ENCODE measurements at regions of chr1 and their contacts with region 1.

Region 1: GRCh38 chr1:12078938-12079861 is 16.1 kb downstream of the TNFRSF8 start:
- DNase-seq: peak; percentile 82
- ATAC-seq: peak; percentile 83
- H3K4me3 ChIP-seq: peak overlapping the region; percentile 52
- H3K27ac ChIP-seq: peak overlapping the region; percentile 97
- H3K4me1 ChIP-seq: peaks cover 67% of the 10 kb centered on the region
- H3K27me3 ChIP-seq: no peaks in the 10 kb centered on the region
- CTCF ChIP-seq: peak; percentile 68 to 74 (median 71)
- EP300 ChIP-seq: peak in 1 of 2 experiments; percentile 11; a peak in 3 of 4 replicates
- POLR2A ChIP-seq: peak; percentile 71
- RAD21 ChIP-seq: peak; percentile 72

Region 2: DNA sequence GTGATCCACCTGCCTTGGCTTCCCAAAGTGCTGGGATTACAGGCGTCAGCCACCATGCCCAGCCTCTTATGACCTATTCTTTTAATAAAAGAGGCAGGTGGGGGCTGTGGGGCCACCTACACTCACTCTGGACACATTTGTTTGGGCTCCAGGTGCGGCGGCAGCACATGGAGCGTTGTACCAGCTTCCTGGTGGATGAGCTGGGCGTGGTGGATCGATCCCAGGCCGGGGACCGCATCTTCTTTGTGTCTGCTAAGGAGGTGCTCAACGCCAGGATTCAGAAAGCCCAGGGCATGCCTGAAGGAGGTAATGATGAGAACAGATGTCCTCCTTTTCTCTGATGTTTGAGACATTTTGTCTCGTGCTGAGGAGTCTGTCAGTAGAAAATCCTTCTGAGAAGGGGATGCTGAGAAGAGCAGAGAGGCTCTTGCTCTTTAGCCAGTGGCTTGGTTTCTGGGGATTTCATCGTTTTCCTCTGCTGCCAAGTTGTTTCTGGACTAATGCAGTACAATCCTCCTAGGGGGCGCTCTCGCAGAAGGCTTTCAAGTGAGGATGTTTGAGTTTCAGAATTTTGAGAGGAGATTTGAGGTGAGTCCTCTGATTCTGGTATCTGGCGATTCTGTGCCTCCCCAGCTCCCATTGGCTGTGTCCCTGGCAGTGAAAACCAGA is 77.8 kb before region 1 on chr1:
- CTCF ChIA-PET with region 1: interaction called, 23 read pairs
- POLR2A ChIA-PET with region 1: interaction called, 7 read pairs
- RAD21 ChIA-PET with region 1: interaction called, 11 read pairs
- SMC1A ChIA-PET with region 1: interaction called, 14 read pairs
- in situ Hi-C with region 1: no loop called
- intact Hi-C with region 1: loop called (anchors 2 kb)
- DNase-seq: no peak
- ATAC-seq: peak; percentile 27
- H3K4me3 ChIP-seq: no peak overlapping the region
- H3K27ac ChIP-seq: no peak overlapping the region
- H3K4me1 ChIP-seq: peaks cover 22% of the 10 kb centered on the region
- H3K27me3 ChIP-seq: no peaks in the 10 kb centered on the region
- CTCF ChIP-seq: peak; percentile 64 to 73 (median 67)
- EP300 ChIP-seq: no peak
- POLR2A ChIP-seq: no peak
- RAD21 ChIP-seq: peak; percentile 70

Region 3: DNA sequence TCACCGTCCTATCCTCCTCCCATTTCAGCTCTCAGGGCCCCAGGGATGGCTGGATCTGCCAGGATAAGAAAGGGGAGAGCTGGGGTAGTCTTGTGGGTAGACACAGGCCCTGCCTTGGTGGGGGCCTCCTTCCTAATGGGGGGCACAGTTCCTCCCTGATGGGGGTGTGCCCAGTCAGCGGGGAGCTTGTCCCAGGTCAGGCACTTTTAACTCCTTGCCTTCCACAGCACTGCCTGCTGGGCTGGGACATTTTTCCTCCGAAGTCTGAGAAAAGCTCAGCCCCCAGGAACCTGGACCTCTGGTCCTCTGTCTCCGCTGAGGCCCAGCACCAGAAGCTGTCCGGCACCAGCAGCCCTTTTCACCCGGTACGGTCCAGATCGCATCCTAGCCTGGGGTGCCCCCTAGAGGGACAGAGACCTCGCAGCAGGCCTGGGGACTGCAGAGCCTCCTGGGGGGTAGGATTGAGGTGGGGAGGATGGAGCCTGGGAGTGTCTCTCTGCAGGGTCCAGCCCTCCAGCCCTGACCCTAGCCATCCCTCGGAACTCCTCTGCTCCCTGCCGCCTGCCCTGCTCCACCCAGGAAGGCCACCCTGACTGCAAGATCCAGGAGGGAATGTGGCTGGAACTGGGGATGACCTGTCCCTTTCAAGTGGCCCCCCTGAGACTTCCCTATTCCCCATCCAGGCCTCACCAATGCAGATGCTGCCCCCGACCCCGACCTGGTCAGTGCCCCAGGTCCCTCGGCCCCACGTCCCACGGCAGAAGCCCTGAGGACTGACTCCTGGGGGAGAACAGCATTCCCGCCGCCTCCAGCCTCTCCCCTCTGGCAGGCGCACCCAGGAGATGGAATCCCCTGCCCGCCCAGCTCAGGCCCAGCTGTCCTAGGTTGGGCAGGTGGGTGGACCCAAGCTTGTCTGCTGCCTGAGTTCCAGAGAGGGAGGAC is 47.9 kb before region 1 on chr1:
- CTCF ChIA-PET with region 1: interaction called, 10 read pairs
- POLR2A ChIA-PET with region 1: no interaction called
- RAD21 ChIA-PET with region 1: interaction called, 70 read pairs
- SMC1A ChIA-PET with region 1: interaction called, 50 read pairs
- in situ Hi-C with region 1: no loop called
- intact Hi-C with region 1: no loop called
- DNase-seq: no peak
- ATAC-seq: peak; percentile 95
- H3K4me3 ChIP-seq: no peak overlapping the region
- H3K27ac ChIP-seq: no peak overlapping the region
- H3K4me1 ChIP-seq: no peaks in the 10 kb centered on the region
- H3K27me3 ChIP-seq: no peaks in the 10 kb centered on the region
- CTCF ChIP-seq: peak; percentile 68 to 80 (median 70)
- EP300 ChIP-seq: no peak
- POLR2A ChIP-seq: no peak
- RAD21 ChIP-seq: peak; percentile 82

Region 4: GRCh38 chr1:12046749-12047119 is 32.5 kb before region 1 on chr1:
- CTCF ChIA-PET with region 1: interaction called, 53 read pairs
- POLR2A ChIA-PET with region 1: interaction called, 134 read pairs
- RAD21 ChIA-PET with region 1: interaction called, 53 read pairs
- SMC1A ChIA-PET with region 1: interaction called, 38 read pairs
- in situ Hi-C with region 1: no loop called
- intact Hi-C with region 1: loop called (anchors 2 kb)
- DNase-seq: no peak
- ATAC-seq: no peak; the same call in 1 of the 3 replicates
- H3K4me3 ChIP-seq: no peak overlapping the region
- H3K27ac ChIP-seq: peak overlapping the region; percentile 94
- H3K4me1 ChIP-seq: peaks cover 75% of the 10 kb centered on the region
- H3K27me3 ChIP-seq: no peaks in the 10 kb centered on the region
- CTCF ChIP-seq: no peak
- EP300 ChIP-seq: no peak
- POLR2A ChIP-seq: no peak
- RAD21 ChIP-seq: no peak

Region 5: GRCh38 chr1:12059722-12060464 is 19.3 kb before region 1 on chr1:
- CTCF ChIA-PET with region 1: interaction called, 80 read pairs
- POLR2A ChIA-PET with region 1: interaction called, 134 read pairs
- RAD21 ChIA-PET with region 1: interaction called, 120 read pairs
- SMC1A ChIA-PET with region 1: interaction called, 106 read pairs
- in situ Hi-C with region 1: no loop called
- intact Hi-C with region 1: no loop called
- DNase-seq: no peak
- ATAC-seq: peak; percentile 64
- H3K4me3 ChIP-seq: peak overlapping the region; percentile 36; the same call in 1 of the 2 replicates
- H3K27ac ChIP-seq: peak overlapping the region; percentile 62
- H3K4me1 ChIP-seq: peaks cover 56% of the 10 kb centered on the region
- H3K27me3 ChIP-seq: no peaks in the 10 kb centered on the region
- CTCF ChIP-seq: 0 out of 6 replicates have a peak, but pooled peaks of 1 of the 3 experiments have one; percentile 0
- EP300 ChIP-seq: no peak
- POLR2A ChIP-seq: no peak
- RAD21 ChIP-seq: no peak

Region 6: DNA sequence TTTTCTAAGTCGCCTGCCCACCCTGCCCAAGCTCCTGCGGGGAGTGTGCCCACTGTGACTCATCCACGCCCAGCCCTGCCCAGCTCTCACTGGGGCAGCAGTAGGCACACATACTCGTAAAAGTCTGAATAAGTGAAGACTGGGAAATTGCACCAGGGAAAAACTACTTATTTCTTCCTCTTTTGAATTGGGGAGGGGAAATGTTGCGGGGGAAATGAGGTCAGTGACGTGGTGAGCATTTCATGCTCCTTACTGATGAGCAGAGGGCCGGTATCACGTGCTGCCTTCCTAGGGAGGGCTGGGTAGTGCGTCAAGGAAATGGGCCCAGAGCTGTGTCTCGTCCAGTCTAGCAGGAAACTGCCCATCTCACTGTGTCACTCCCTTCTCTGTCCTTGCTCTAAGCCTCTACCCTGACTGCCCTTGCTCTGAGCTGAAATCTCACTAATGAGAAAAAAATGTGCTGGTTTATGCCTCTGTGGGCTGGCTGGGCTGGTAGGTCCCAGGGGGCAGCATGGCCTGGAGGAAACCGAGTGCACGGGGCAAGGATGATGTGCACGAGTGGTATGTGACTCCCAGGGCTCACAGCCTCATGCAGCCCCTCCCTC is 74.1 kb after region 1 on chr1:
- CTCF ChIA-PET with region 1: interaction called, 6 read pairs
- POLR2A ChIA-PET with region 1: interaction called, 4 read pairs
- RAD21 ChIA-PET with region 1: no interaction called
- SMC1A ChIA-PET with region 1: interaction called, 10 read pairs
- in situ Hi-C with region 1: no loop called
- intact Hi-C with region 1: no loop called
- DNase-seq: peak; percentile 78
- ATAC-seq: peak; percentile 68
- H3K4me3 ChIP-seq: no peak overlapping the region
- H3K27ac ChIP-seq: peak overlapping the region; percentile 84
- H3K4me1 ChIP-seq: peaks cover 76% of the 10 kb centered on the region
- H3K27me3 ChIP-seq: no peaks in the 10 kb centered on the region
- CTCF ChIP-seq: no peak
- EP300 ChIP-seq: 0 out of 4 replicates have a peak, but pooled peaks of 1 of the 2 experiments have one; percentile 6
- POLR2A ChIP-seq: 0 out of 2 replicates have a peak, but pooled peaks have one; percentile 40
- RAD21 ChIP-seq: no peak

Region 7: DNA sequence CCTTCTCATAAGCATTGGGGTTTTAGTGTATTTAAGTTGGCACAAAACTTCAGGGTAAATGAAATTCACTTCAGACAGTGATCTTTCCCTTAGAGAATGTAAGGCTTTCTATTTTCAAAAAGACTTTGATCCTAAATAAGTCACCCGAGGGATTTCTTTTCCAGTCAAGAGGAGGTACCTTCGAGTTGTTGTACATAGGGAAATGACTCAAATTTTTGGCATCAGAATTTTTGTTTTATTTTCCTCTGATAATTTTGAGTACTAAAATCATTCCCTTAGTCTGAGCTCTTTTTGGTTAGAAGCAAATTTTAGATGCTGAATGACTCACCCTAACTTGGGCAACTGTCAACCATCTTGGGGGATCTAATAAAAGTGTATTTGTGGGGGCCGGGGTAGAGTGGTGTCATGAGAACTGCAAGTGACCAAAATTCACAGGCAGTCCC is 344.9 kb after region 1 on chr1:
- CTCF ChIA-PET with region 1: no interaction called
- POLR2A ChIA-PET with region 1: no interaction called
- RAD21 ChIA-PET with region 1: no interaction called
- SMC1A ChIA-PET with region 1: no interaction called
- in situ Hi-C with region 1: no loop called
- intact Hi-C with region 1: no loop called
- DNase-seq: no peak
- ATAC-seq: no peak
- H3K4me3 ChIP-seq: no peak overlapping the region
- H3K27ac ChIP-seq: no peak overlapping the region
- H3K4me1 ChIP-seq: no peaks in the 10 kb centered on the region
- H3K27me3 ChIP-seq: no peaks in the 10 kb centered on the region
- CTCF ChIP-seq: no peak
- EP300 ChIP-seq: no peak
- POLR2A ChIP-seq: no peak
- RAD21 ChIP-seq: no peak

Measured in GM12878 (cell line).